ENCODE measurements at regions of chr11 and their contacts with region 1.

Region 1: GRCh38 chr11:72040726-72041441 is 39.5 kb downstream of the NUMA1 start:
- DNase-seq: no peak
- ATAC-seq: peak; percentile 63
- H3K4me3 ChIP-seq: peak overlapping the region; percentile 65
- H3K27ac ChIP-seq: peak overlapping the region; percentile 71
- H3K4me1 ChIP-seq: peaks cover 35% of the 10 kb centered on the region
- H3K27me3 ChIP-seq: no peaks in the 10 kb centered on the region
- CTCF ChIP-seq: no peak
- EP300 ChIP-seq: no peak
- POLR2A ChIP-seq: peak; percentile 44
- RAD21 ChIP-seq: no peak

Region 2: GRCh38 chr11:72024069-72024754 is 16.7 kb before region 1 on chr11:
- CTCF ChIA-PET with region 1: interaction called, 63 read pairs
- POLR2A ChIA-PET with region 1: interaction called, 4 read pairs
- RAD21 ChIA-PET with region 1: interaction called, 26 read pairs
- SMC1A ChIA-PET with region 1: interaction called, 28 read pairs
- in situ Hi-C with region 1: no loop called
- intact Hi-C with region 1: no loop called
- DNase-seq: no peak
- ATAC-seq: no peak
- H3K4me3 ChIP-seq: no peak overlapping the region
- H3K27ac ChIP-seq: no peak overlapping the region
- H3K4me1 ChIP-seq: no peaks in the 10 kb centered on the region
- H3K27me3 ChIP-seq: no peaks in the 10 kb centered on the region
- CTCF ChIP-seq: no peak
- EP300 ChIP-seq: no peak
- POLR2A ChIP-seq: no peak
- RAD21 ChIP-seq: no peak

Region 3: DNA sequence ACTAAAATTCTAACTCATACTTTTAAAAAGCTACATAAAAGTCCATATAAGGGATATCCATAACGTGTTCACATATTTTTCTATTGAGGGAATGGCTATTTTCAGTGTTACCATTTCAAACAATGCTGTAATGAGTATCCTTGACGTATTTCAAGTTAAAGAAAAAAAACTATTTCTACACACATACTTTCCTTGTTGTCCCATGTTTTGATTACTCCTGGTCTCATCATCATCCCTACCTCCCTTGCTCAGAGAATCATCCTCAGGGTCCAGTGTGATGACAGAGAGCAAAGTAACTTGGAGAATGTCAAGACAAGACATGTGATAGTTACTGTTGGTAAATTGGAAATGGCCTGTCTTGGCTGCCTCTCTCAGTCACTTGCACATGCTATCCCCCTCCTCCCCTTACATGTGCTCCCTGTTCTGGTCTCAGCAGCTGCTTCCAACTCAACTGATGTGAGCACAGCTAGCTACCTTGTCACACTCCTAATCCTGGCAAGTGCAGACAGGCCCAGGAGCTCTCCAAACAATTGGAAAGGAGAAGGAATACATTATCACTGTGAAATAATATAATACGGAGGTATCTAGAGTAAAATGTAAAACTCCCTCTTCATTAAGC is 17.6 kb after region 1 on chr11:
- CTCF ChIA-PET with region 1: interaction called, 4 read pairs
- POLR2A ChIA-PET with region 1: interaction called, 6 read pairs
- RAD21 ChIA-PET with region 1: interaction called, 9 read pairs
- SMC1A ChIA-PET with region 1: interaction called, 21 read pairs
- in situ Hi-C with region 1: no loop called
- intact Hi-C with region 1: no loop called
- DNase-seq: no peak
- ATAC-seq: no peak
- H3K4me3 ChIP-seq: no peak overlapping the region
- H3K27ac ChIP-seq: no peak overlapping the region
- H3K4me1 ChIP-seq: no peaks in the 10 kb centered on the region
- H3K27me3 ChIP-seq: no peaks in the 10 kb centered on the region
- CTCF ChIP-seq: no peak
- EP300 ChIP-seq: no peak
- POLR2A ChIP-seq: no peak
- RAD21 ChIP-seq: no peak

Region 4: DNA sequence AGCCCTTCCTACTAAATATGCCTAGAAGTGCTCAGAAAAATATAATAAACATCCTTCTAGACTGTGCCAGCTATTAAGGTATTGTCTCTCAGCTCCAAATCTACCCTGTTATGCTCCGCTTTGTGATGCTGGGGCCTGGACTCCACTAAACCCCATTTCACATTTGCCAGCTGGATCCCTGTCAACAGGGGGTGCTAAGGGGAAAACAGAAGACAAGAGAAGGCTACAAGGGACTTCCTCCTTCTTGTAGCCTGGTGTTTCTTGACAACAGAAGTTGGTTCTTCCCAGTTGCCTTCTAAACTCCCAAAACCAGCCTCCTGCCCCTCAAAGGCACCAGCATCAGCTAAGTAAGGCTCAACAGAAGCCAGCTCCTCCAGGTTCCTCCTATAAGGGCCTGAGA is 34.2 kb after region 1 on chr11:
- CTCF ChIA-PET with region 1: interaction called, 12 read pairs
- POLR2A ChIA-PET with region 1: interaction called, 15 read pairs
- RAD21 ChIA-PET with region 1: interaction called, 46 read pairs
- SMC1A ChIA-PET with region 1: interaction called, 48 read pairs
- in situ Hi-C with region 1: no loop called
- intact Hi-C with region 1: loop called (anchors 2 kb)
- DNase-seq: no peak
- ATAC-seq: peak; percentile 28; the same call in 1 of the 3 replicates
- H3K4me3 ChIP-seq: no peak overlapping the region
- H3K27ac ChIP-seq: peak overlapping the region; percentile 48
- H3K4me1 ChIP-seq: peaks cover 15% of the 10 kb centered on the region
- H3K27me3 ChIP-seq: no peaks in the 10 kb centered on the region
- CTCF ChIP-seq: peak; percentile 32 to 59 (median 41)
- EP300 ChIP-seq: no peak
- POLR2A ChIP-seq: no peak
- RAD21 ChIP-seq: peak; percentile 34; the same call in 1 of the 2 replicates

Region 5: GRCh38 chr11:72085621-72086351 is 44.9 kb after region 1 on chr11:
- CTCF ChIA-PET with region 1: interaction called, 416 read pairs
- POLR2A ChIA-PET with region 1: interaction called, 13 read pairs
- RAD21 ChIA-PET with region 1: interaction called, 17 read pairs
- SMC1A ChIA-PET with region 1: interaction called, 30 read pairs
- in situ Hi-C with region 1: no loop called
- intact Hi-C with region 1: loop called (anchors 2 kb)
- DNase-seq: no peak
- ATAC-seq: no peak
- H3K4me3 ChIP-seq: no peak overlapping the region
- H3K27ac ChIP-seq: no peak overlapping the region
- H3K4me1 ChIP-seq: peaks cover 10% of the 10 kb centered on the region
- H3K27me3 ChIP-seq: no peaks in the 10 kb centered on the region
- CTCF ChIP-seq: no peak
- EP300 ChIP-seq: no peak
- POLR2A ChIP-seq: no peak
- RAD21 ChIP-seq: no peak

Region 6: GRCh38 chr11:72102946-72103753 is 62.3 kb after region 1 on chr11 and contains the start of gene LAMTOR1:
- CTCF ChIA-PET with region 1: interaction called, 416 read pairs
- POLR2A ChIA-PET with region 1: interaction called, 13 read pairs
- RAD21 ChIA-PET with region 1: no interaction called
- SMC1A ChIA-PET with region 1: interaction called, 10 read pairs
- in situ Hi-C with region 1: no loop called
- intact Hi-C with region 1: no loop called
- DNase-seq: peak; percentile 97
- ATAC-seq: peak; percentile 97
- H3K4me3 ChIP-seq: peak within 1 kb of the TSS; percentile 94
- H3K27ac ChIP-seq: peak within 1 kb of the TSS; percentile 90
- H3K4me1 ChIP-seq: peaks cover 21% of the 10 kb centered on the region
- H3K27me3 ChIP-seq: no peaks in the 10 kb centered on the region
- CTCF ChIP-seq: peak; percentile 20 to 48 (median 40); a peak in 5 of 6 replicates
- EP300 ChIP-seq: peak in 1 of 2 experiments; percentile 17; a peak in 1 of 4 replicates
- POLR2A ChIP-seq: peak; percentile 94
- RAD21 ChIP-seq: no peak
- polyA plus RNA-seq, gene LAMTOR1: 85.1 to 126 TPM

Region 7: GRCh38 chr11:72141066-72141465 is 100.2 kb after region 1 on chr11:
- CTCF ChIA-PET with region 1: interaction called, 19 read pairs
- POLR2A ChIA-PET with region 1: no interaction called
- RAD21 ChIA-PET with region 1: interaction called, 4 read pairs
- SMC1A ChIA-PET with region 1: interaction called, 4 read pairs
- in situ Hi-C with region 1: no loop called
- intact Hi-C with region 1: no loop called
- DNase-seq: no peak
- ATAC-seq: no peak
- H3K4me3 ChIP-seq: no peak overlapping the region
- H3K27ac ChIP-seq: no peak overlapping the region
- H3K4me1 ChIP-seq: no peaks in the 10 kb centered on the region
- H3K27me3 ChIP-seq: no peaks in the 10 kb centered on the region; a peak in 1 of 4 replicates
- CTCF ChIP-seq: no peak
- EP300 ChIP-seq: no peak
- POLR2A ChIP-seq: no peak
- RAD21 ChIP-seq: no peak

Region 8: GRCh38 chr11:72209101-72209500 is 168.2 kb after region 1 on chr11:
- CTCF ChIA-PET with region 1: no interaction called
- POLR2A ChIA-PET with region 1: no interaction called
- RAD21 ChIA-PET with region 1: no interaction called
- SMC1A ChIA-PET with region 1: no interaction called
- in situ Hi-C with region 1: no loop called
- intact Hi-C with region 1: no loop called
- DNase-seq: no peak
- ATAC-seq: no peak
- H3K4me3 ChIP-seq: no peak overlapping the region
- H3K27ac ChIP-seq: no peak overlapping the region
- H3K4me1 ChIP-seq: peaks cover 2% of the 10 kb centered on the region; the same call in 1 of the 2 replicates
- H3K27me3 ChIP-seq: no peaks in the 10 kb centered on the region
- CTCF ChIP-seq: no peak
- EP300 ChIP-seq: no peak
- POLR2A ChIP-seq: no peak
- RAD21 ChIP-seq: no peak